Posterior cingulate gyrus (tissue), 11 donors: ENCODE measurements at regions of chr14 and their contacts with region 1.

Region 1: DNA sequence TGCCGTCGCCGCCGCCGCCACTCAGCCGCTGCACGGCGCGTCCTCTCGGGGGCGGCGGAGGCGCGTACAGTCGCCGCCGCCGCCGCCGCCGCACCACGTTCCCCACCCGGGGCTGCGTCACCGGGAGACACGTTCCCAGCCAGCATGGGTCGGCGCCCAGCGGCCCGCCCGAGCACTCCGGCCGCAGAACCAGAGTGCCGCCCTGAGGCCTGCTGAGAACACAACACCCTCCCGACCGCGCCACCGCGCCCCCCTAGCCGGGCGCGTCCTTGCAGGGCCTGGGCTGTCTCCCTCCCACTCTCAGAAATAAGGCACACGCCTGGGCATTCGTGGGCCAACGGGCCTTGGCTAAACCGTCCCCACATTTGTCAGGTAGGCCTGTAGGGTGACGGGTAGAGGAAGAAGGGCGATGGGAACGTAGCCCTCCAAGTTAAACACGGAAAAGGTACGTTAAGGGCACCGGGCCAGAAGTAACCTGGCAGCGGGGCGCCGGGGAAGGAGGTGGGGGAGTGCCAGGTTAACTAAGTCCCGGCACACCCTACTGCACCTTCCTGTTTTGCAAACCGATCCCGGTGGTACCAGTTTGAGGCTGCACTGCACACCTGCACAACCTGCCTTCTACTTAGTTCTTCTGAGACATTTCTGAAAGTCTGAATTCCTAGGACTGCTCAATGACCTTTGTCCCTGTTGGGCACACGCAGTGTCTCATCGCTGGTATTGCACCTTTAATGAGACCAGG is at the start of gene MAP4K5:
- DNase-seq: peak; percentile 84 to 99 (median 92)

Region 2: GRCh38 chr14:50231475-50232275 is 301.0 kb before region 1 on chr14 and contains the start of gene SOS2:
- intact Hi-C with region 1: loop called (anchors 10 kb)
- DNase-seq: peak; percentile 74 to 97 (median 84)

Region 3: GRCh38 chr14:50311975-50312733 is 220.5 kb before region 1 on chr14 and contains the starts of genes DMAC2L and L2HGDH:
- intact Hi-C with region 1: loop called (anchors 2 kb)
- DNase-seq: peak; percentile 88 to 99 (median 93)

Region 4: DNA sequence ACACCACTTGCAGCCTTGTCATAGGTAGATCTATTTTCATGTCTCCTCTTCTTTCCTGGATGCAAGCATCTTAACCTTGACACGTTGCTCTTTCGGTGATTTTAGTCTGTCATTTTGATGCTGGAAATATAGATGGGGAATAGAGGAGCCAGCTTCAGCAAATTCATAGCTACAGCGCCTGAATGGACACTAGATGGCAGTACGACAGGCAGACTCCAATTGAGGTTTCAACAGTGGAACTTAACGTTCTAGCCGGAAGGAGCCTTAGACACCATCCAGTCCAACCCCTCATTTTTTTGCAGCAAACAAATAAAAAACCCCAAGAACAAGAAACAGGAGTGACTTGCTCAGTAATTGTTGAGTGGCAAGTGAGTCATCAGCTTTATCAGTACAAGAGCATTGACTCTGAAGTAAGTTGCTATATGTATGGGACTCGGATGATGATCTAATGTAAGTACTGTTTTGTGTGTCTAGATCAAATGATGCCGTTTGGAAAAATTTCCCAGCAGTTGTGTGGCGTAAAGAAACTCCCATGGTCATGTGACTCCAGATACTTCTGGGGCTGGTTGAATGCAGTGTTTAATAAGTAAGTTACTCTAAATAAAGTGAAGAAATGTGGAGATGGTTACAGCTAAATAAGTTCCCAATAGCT is 211.5 kb before region 1 on chr14:
- intact Hi-C with region 1: loop called (anchors 1 kb)
- DNase-seq: peak in 6 of 10 donors; percentile 47 to 89 (median 62)

Region 5: DNA sequence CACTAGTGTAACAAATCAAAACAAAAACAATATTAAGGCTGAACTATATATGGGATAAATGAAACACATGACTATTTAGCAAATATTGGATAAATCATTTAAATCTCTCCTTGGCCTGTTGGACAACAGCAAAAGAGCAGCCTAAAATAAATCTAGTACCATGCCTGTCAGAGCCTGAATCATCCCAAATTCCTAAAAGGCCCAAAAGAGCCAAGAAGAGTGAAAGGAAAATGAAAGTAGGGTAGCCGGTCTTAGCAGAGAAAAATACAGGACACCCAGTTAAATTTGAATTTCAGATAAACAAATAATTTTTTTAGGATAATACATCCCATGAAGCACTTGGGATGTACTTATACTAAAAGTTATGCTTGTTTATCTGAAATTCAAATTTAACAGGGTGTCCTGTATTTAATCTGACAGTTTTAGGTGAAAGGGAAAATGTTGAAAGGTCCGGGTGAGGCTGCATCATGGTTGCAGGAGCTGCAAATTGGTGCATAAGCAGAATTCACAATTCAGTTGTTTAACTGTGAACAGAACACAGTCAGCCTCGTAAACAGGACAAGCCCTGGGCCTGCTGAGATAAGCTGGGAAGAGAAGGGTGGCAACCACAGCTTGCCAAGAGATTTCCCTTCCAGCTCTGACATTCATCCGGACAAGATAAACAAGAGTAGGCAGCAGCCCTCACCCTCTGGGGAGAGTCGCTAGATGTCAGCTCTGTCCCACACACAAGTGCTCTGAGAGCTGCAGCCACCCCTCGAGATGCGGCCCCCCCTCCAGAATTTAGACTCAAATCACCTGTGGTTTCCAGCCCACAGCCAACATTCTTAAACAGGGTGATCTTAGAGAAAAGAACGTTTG is 190.2 kb before region 1 on chr14:
- intact Hi-C with region 1: loop called (anchors 1 kb)
- DNase-seq: peak; percentile 50 to 95 (median 75)

Region 6: GRCh38 chr14:50396631-50397390 is 135.9 kb before region 1 on chr14 and contains the start of gene CDKL1:
- intact Hi-C with region 1: loop called (anchors 5 kb)
- DNase-seq: peak in 9 of 10 donors; percentile 31 to 90 (median 45)

Region 7: GRCh38 chr14:50452979-50453705 is 79.5 kb before region 1 on chr14:
- intact Hi-C with region 1: loop called (anchors 5 kb)
- DNase-seq: no peak